Heart left ventricle (tissue), 16 donors: ENCODE measurements at regions of chr15 and their contacts with region 1.

Region 1: DNA sequence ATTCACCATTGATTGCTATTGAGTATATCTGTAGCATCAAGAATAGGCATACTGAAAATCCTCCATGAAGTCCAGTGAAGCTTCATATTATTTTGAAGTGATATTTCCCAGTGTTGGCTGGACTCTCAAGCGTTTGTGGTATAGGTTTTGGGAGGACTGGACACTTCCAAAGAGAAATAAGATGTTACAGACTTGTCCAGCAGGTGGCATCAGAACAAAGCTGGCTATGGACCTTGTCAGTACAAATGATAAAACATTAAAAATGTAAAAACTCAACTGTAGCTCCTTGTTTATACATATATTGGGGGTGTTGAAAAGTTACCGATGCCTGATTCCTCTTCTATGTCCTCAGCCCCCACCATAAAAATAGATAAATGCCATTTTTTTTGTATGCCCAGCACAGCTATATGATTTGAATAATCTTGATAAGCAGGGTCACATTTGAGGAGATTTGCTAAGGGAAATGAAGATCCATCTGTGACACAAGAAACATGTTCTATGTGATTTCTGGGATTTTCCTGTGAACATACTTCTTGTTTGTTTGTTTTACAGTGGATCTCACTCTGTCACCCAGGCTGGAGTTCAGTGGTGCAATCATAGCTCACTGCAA is 54.5 kb upstream of the GOLGA6B start:
- DNase-seq: no peak
- ATAC-seq: peak in 1 of 4 donors; percentile 45
- H3K4me3 ChIP-seq: no peak overlapping the region
- H3K27ac ChIP-seq: no peak overlapping the region
- H3K4me1 ChIP-seq: peaks cover 0 to 3% (median 0%) of the 10 kb centered on the region in 12 donors
- H3K27me3 ChIP-seq: no peaks in the 10 kb centered on the region
- CTCF ChIP-seq: peak; percentile 47 to 73 (median 62)
- POLR2A ChIP-seq: no peak

Region 2: DNA sequence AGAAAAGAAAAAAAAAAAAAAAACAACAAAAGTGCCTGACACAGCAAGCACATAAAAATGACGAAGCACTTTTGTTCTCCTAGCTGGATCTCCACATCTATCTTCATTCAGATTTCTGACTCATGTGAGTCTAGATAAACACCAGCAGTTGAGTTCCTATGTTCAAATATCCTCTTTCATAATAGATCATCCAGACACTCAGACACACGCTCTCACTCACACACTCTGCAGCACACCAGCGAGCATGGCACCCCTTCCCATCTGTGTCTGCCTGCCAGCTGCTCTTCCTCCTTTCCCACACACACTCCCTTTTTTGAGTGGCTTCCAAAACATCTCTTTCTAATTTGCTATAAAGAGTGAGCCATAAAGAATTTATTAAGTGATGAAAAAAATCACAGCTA is 260.2 kb before region 1 on chr15:
- intact Hi-C with region 1: loop called in 1 of 10 experiments (anchors 10 kb)
- DNase-seq: no peak
- ATAC-seq: peak in 2 of 4 donors; percentile 55 to 56
- H3K4me3 ChIP-seq: no peak overlapping the region
- H3K27ac ChIP-seq: peak overlapping the region in 2 of 12 donors; percentile 53 to 69
- H3K4me1 ChIP-seq: peaks cover 0 to 21% (median 0%) of the 10 kb centered on the region in 12 donors
- H3K27me3 ChIP-seq: no peaks in the 10 kb centered on the region
- CTCF ChIP-seq: no peak
- POLR2A ChIP-seq: no peak

Region 3: DNA sequence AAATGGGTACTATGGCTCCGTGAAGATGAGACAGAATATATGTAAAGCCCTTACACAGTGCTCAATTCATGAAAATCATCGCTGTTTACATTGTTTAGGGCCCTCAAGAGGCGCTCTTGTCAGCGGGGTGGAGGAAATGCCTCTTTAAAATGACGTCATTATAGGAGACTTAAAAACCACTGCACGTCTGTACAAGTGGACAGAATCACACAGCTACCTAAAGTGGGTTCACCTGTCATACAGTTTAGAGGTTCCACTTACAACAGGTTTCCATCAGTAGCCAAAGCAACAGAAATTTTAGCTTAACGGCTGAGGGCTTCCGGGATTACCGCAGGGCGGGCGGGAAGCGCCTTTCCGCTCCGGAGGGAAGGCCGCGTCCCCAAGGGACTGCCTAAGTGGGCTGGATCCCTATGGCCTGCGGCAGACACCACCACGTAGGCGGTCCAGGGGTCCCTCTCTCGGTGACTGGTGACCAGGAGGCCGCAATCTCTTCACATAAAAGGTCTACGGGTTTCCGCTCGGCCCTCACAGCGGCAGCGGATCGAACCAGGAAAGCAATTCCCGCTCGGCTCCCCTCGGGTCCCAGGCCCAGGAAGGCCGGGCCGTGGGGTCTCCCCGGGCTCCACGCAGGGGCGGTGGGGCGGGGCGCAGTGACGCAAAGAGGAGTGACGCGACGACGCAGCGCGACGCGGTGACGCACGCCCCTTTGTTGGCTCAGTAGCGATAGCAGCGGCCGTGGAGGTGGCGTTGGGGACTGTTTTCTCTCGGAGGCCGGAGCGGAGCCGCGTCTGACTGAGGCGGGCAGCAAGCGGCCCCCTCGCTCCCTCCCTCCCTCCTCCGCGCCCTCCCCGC is 126.1 kb before region 1 on chr15 and contains the start of gene ARIH1:
- intact Hi-C with region 1: no loop called
- DNase-seq: peak; percentile 97 to 99 (median 98)
- ATAC-seq: peak; percentile 97 to 98 (median 98)
- H3K4me3 ChIP-seq: peak within 1 kb of the TSS; percentile 55 to 95 (median 81)
- H3K27ac ChIP-seq: peak within 1 kb of the TSS; percentile 95 to 100 (median 99)
- H3K4me1 ChIP-seq: peaks cover 0 to 48% (median 37%) of the 10 kb centered on the region in 12 donors
- H3K27me3 ChIP-seq: no peaks in the 10 kb centered on the region
- CTCF ChIP-seq: peak in 6 of 12 donors; percentile 4 to 35 (median 20)
- POLR2A ChIP-seq: peak; percentile 59 to 98
- total RNA-seq, gene ARIH1: 50.2 to 217 (median 167) TPM

Region 4: DNA sequence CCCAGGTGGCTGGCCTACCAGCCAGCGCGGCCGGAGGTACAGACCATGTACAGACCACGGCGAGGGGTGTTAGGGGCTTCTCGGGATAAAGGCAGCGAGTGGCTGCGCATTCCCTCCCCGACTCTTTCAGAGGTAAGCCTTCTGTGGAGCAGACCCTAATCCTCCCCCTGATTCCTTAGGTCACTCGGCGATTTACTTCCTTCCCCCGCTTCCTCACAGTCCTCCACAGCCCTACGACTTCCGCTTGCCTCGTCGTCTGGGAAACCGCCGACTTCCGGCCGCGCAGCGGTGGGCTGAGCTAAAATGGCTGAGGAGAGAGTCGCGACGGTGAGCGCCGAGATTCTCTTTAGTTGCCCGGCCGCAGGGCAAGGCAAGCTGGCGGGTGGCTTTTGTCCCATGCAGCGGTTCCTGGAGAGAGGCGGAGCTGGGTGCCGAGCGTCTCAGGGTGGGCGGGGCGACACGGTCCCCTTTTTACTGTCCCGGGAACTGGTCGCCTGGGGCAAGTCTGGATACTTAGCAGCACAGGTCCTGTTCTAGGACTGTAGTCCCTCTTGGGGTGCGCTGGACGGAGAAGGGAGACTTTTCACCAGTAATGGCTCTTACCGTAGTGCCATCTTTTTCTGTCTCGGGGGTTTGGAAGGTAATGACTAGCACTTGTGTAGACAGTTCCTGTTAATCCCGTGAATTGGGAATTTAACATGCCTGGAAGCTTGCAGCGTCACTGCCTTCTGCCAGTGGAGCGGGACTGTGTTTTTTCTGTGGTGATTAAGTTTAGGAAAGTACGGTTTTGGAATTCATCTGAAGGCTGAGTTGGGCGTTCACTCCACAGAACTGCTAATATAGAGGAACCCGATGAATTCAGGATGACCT is 86.2 kb after region 1 on chr15 and contains the starts of genes BBS4 and HIGD2B:
- intact Hi-C with region 1: loop called in 1 of 10 experiments (anchors 10 kb)
- DNase-seq: peak; percentile 87 to 91 (median 89)
- ATAC-seq: peak; percentile 96 to 99 (median 98)
- H3K4me3 ChIP-seq: peak within 1 kb of the TSS; percentile 41 to 91 (median 67)
- H3K27ac ChIP-seq: peak within 1 kb of the TSS; percentile 69 to 96 (median 85)
- H3K4me1 ChIP-seq: peaks cover 0 to 14% (median 8%) of the 10 kb centered on the region in 12 donors
- H3K27me3 ChIP-seq: no peaks in the 10 kb centered on the region
- CTCF ChIP-seq: no peak
- POLR2A ChIP-seq: peak in 1 of 2 donors; percentile 65
- total RNA-seq, gene BBS4: 5.9 to 19.4 (median 13.1) TPM
- total RNA-seq, gene HIGD2B: 0.23 TPM in 1 of 9 donors, not detected in the others

Region 5: DNA sequence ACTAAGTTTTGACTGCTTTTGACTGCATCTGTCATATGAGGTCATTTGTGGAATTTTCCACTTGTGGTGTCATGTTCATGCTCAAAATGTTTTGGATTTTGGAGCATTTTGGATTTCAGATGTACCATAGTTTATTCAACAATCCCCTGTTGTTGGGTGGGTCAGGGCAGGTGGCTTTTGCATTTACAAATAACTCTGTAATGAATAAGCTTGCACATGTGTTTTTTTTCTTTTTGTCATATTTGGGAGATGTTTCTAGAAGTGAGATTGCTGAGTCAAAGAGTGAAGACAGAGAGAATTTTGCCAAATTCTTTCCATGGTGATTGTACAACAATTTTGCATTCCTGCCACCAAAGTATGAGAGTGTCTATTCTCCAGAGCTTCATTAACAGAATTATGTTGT is 246.0 kb after region 1 on chr15:
- intact Hi-C with region 1: no loop called
- DNase-seq: no peak
- ATAC-seq: peak in 1 of 4 donors; percentile 62
- H3K4me3 ChIP-seq: no peak overlapping the region
- H3K27ac ChIP-seq: no peak overlapping the region
- H3K4me1 ChIP-seq: peaks cover 0 to 6% (median 0%) of the 10 kb centered on the region in 12 donors
- H3K27me3 ChIP-seq: peaks cover 0 to 29% (median 4%) of the 10 kb centered on the region in 9 donors
- CTCF ChIP-seq: no peak
- POLR2A ChIP-seq: no peak

Region 6: DNA sequence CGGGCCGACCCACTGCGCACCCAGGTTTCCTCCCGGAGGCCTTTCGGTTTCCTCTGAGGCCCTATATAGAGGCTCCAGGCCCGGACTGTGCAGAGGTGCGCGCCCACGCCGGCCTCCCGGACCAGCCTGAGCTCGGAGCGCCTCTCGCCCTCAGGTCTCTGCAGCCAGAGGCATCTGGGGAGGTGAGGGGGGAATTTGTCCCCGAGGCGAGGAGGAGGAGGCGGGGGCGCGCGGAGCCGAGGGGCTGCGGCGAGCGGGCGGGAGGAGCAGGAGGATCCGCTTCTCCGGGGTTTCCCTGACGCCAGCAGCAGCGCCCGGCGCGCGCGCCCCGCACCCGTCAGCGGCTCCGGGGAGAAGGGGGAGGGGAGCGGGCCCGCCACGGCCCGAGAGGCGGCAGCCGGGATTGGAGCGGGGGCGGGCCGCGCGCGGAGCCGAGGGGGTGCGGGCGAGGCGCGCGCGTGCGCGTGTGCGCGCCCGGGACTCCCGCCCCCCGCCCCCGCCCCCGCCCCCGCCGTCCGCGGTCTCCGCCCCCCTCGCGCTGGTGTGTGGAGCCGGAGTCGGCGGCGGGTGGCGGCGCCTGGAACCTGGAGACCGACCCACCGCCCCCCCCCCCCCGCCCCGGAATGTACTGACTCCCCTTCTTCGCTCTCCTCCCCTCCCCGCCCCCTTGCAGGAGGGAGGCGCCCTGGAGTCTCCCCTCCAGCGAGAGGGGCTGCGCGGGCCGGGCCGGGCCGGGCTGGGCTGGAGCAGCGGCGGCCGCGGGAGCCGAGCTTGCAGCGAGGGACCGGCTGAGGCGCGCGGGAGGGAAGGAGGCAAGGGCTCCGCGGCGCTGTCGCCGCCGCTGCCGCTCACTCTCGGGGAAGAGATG is 452.1 kb after region 1 on chr15 and contains the start of gene NEO1:
- intact Hi-C with region 1: no loop called
- DNase-seq: peak; percentile 88 to 93 (median 88)
- ATAC-seq: peak; percentile 84 to 96 (median 96)
- H3K4me3 ChIP-seq: peak within 1 kb of the TSS; percentile 73 to 97 (median 82)
- H3K27ac ChIP-seq: peak within 1 kb of the TSS; percentile 74 to 97 (median 92)
- H3K4me1 ChIP-seq: peaks cover 0 to 19% (median 8%) of the 10 kb centered on the region in 12 donors
- H3K27me3 ChIP-seq: peaks cover 0 to 37% (median 0%) of the 10 kb centered on the region in 9 donors
- CTCF ChIP-seq: no peak
- POLR2A ChIP-seq: peak in 1 of 2 donors; percentile 45
- total RNA-seq, gene NEO1: 10.7 to 31.5 (median 13.5) TPM

Region 7: DNA sequence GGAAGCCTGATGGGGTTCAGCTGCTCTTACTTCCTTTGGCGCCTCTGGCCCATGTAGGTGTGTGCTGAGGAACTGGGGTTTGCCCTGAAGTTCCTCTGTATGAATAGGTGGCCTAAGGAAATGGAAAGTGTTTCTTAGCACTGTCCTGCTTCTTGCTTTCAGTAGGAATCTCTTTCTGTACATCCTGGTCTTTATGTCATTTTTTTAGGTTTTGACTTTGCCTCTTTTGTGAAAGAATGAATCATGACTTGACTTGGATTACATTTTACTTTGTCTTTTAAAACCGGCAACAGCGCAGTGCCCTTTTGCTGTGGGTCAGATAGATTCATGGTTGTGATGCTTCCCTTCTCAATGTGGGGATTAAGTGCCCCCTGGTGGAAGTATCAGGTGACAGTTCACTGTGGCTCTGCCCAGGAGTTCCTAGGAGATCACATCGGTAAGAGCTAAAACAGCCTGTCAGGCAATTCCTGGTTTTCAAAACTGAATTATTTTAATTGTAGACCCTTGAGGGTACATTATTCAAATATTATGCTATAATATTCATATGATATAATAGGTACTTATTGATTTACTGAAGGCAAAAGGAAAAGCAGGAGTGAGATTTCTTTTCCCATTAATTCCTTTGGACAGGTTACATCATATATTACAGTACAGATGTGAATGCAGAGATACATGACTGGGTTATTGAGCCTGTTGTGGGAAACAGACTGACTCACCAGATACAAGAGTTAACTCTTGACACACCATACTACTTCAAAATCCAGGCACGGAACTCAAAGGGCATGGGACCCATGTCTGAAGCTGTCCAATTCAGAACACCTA is 673.4 kb after region 1 on chr15:
- intact Hi-C with region 1: loop called in 1 of 10 experiments (anchors 10 kb)
- DNase-seq: peak in 3 of 5 donors; percentile 34 to 38 (median 34)
- ATAC-seq: peak; percentile 71 to 90 (median 84)
- H3K4me3 ChIP-seq: no peak overlapping the region
- H3K27ac ChIP-seq: no peak overlapping the region
- H3K4me1 ChIP-seq: peaks cover 0 to 4% (median 0%) of the 10 kb centered on the region in 12 donors
- H3K27me3 ChIP-seq: no peaks in the 10 kb centered on the region
- CTCF ChIP-seq: peak; percentile 59 to 84 (median 75)
- POLR2A ChIP-seq: no peak

Region 8: GRCh38 chr15:74053941-74054529 is 1454.1 kb after region 1 on chr15:
- intact Hi-C with region 1: loop called in 1 of 10 experiments (anchors 10 kb)
- DNase-seq: peak; percentile 68 to 88 (median 77)
- ATAC-seq: peak; percentile 46 to 85 (median 72)
- H3K4me3 ChIP-seq: peak overlapping the region in 2 of 12 donors; percentile 25 to 32
- H3K27ac ChIP-seq: peak overlapping the region in 3 of 12 donors; percentile 29 to 52 (median 48)
- H3K4me1 ChIP-seq: peaks cover 0 to 38% (median 24%) of the 10 kb centered on the region in 12 donors
- H3K27me3 ChIP-seq: no peaks in the 10 kb centered on the region
- CTCF ChIP-seq: peak; percentile 38 to 84 (median 59)
- POLR2A ChIP-seq: no peak